Transverse colon (tissue), 4 donors: ENCODE measurements at regions of chr6 and their contacts with region 1.

Region 1: GRCh38 chr6:120994573-120994967 is 339.7 kb downstream of the TBC1D32 start:
- DNase-seq: no peak
- H3K4me3 ChIP-seq: no peak overlapping the region
- H3K27ac ChIP-seq: no peak overlapping the region
- H3K4me1 ChIP-seq: no peaks in the 10 kb centered on the region
- H3K27me3 ChIP-seq: no peaks in the 10 kb centered on the region
- CTCF ChIP-seq: no peak
- EP300 ChIP-seq: no peak
- POLR2A ChIP-seq: no peak

Region 2: DNA sequence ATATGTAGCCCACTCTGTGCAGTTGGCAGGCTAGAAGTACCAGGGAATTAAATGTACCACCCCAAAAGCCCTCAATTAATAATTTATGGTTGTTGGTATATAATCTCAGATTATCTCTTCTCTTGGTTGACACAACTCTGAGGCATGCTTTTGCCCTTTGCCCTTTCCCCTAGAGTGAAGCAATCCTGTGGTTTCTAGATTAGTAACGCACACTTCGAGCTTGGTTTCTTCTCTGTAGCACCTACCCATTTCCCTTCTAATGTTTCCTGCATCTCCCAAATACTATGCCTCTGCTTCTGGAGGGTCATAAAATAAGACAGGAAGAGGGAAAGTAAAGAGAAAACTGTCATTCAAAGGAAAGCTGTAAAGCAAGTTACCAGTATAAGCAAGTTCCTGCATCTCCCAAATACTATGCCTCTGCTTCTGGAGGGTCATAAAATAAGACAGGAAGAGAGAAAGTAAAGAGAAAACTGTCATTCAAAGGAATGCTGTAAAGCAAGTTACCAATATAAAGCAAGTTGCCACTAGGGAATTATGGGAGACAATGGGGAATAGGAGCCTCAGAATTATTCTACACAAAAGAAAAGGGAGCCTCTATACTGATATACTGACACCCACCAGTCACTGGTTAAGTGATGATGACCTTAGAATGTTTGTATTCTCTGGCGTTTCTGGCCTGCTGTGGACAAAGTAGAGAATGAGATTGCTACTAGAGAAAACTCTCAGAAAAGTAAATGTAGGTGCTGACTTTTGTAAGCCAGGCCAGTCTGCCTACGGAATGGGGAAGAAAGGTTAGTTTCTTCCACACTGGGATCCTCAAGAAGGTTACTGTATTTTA is 782.4 kb before region 1 on chr6:
- in situ Hi-C with region 1: no loop called
- intact Hi-C with region 1: loop called (anchors 10 kb)
- DNase-seq: no peak
- H3K4me3 ChIP-seq: no peak overlapping the region
- H3K27ac ChIP-seq: no peak overlapping the region
- H3K4me1 ChIP-seq: no peaks in the 10 kb centered on the region
- H3K27me3 ChIP-seq: no peaks in the 10 kb centered on the region
- CTCF ChIP-seq: no peak
- EP300 ChIP-seq: no peak
- POLR2A ChIP-seq: no peak